Activated naive CD4-positive, alpha-beta T cell treated with anti-CD3 and anti-CD28 coated beads for 36 hours (primary cell): ENCODE measurements at regions of chr7 and their contacts with region 1.

Region 1: GRCh38 chr7:80095545-80095944 is 39.1 kb upstream of the GNAI1 start:
- DNase-seq: no peak
- H3K4me3 Mint-ChIP-seq: no peak overlapping the region
- H3K27ac Mint-ChIP-seq: no peak overlapping the region
- H3K4me1 Mint-ChIP-seq: no peaks in the 10 kb centered on the region
- H3K27me3 Mint-ChIP-seq: no peaks in the 10 kb centered on the region

Region 2: DNA sequence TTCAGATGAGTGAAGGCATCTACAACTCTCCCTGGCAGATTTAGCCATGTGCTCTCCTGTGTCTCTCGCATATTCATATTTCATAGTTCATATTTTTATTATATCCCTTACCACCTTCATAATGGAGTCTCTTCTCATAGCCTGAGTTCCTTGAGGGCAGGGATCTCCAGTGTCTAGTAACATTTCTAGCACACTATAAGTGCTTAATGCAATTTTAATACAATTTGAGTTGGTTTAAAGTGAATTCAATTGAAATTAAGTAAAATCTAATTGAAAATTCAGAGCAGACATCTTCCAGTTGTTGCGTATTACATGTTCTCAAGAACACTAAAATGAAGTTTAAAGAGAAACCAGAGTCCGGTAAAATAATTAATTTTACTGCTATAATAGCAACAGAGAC is 124.5 kb before region 1 on chr7:
- CTCF ChIA-PET with region 1: no interaction called
- intact Hi-C with region 1: no loop called
- DNase-seq: no peak
- H3K4me3 Mint-ChIP-seq: no peak overlapping the region
- H3K27ac Mint-ChIP-seq: no peak overlapping the region
- H3K4me1 Mint-ChIP-seq: peaks cover 3% of the 10 kb centered on the region
- H3K27me3 Mint-ChIP-seq: no peaks in the 10 kb centered on the region

Region 3: GRCh38 chr7:79982141-79982770 is 113.3 kb before region 1 on chr7:
- CTCF ChIA-PET with region 1: no interaction called
- intact Hi-C with region 1: no loop called
- DNase-seq: no peak
- H3K4me3 Mint-ChIP-seq: no peak overlapping the region
- H3K27ac Mint-ChIP-seq: no peak overlapping the region
- H3K4me1 Mint-ChIP-seq: peaks cover 2% of the 10 kb centered on the region
- H3K27me3 Mint-ChIP-seq: no peaks in the 10 kb centered on the region

Region 4: GRCh38 chr7:80392229-80393169 is 297.0 kb after region 1 on chr7:
- CTCF ChIA-PET with region 1: interaction called, 5 read pairs
- intact Hi-C with region 1: loop called (anchors 1 kb)
- DNase-seq: no peak
- H3K4me3 Mint-ChIP-seq: no peak overlapping the region
- H3K27ac Mint-ChIP-seq: no peak overlapping the region
- H3K4me1 Mint-ChIP-seq: no peaks in the 10 kb centered on the region
- H3K27me3 Mint-ChIP-seq: no peaks in the 10 kb centered on the region

Region 5: DNA sequence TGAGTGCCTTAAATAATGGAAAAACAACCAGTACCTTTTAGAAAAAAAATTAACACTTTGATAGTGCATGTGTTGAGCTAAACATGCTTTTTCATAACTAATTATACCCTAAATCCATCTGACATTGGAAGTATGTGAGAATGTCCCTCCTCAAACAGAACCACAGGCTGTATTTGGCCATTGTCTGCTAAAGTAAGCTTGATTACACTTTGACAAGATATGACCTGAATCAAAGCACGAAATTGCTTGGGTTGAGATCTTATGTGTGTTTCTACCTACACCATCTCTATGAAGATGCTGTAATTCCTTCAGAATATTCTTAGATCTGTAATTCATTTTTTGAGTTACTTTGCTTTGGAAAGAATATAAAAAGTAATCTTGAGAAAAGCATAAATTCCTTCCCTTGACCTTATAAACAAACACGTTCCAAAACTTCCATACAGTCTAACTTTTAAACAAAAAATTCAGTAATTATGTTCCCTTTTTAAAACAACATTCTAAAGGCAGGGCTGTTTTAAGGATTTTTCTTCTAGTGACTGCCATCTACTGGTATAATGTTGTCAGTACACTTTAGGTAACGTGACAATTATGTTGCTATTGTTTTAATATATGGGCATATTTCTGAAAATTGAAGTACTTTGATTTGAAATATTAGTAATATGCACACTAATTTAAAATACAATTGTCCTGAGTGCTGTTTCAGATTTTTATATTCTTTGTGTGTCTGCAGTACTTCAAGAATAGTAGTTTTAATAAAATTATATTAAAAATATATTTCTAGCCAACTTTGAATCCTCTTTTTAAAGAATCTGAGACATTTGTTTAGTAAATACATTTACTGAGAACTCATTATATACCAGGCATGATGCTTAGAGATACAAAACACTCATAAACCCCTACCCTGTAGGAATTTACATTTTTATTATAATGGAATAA is 563.8 kb after region 1 on chr7:
- CTCF ChIA-PET with region 1: no interaction called
- intact Hi-C with region 1: loop called (anchors 1 kb)
- DNase-seq: no peak
- H3K4me3 Mint-ChIP-seq: no peak overlapping the region
- H3K27ac Mint-ChIP-seq: no peak overlapping the region
- H3K4me1 Mint-ChIP-seq: no peaks in the 10 kb centered on the region
- H3K27me3 Mint-ChIP-seq: no peaks in the 10 kb centered on the region